ENCODE measurements at regions of chr3 and their contacts with region 1.

Region 1: DNA sequence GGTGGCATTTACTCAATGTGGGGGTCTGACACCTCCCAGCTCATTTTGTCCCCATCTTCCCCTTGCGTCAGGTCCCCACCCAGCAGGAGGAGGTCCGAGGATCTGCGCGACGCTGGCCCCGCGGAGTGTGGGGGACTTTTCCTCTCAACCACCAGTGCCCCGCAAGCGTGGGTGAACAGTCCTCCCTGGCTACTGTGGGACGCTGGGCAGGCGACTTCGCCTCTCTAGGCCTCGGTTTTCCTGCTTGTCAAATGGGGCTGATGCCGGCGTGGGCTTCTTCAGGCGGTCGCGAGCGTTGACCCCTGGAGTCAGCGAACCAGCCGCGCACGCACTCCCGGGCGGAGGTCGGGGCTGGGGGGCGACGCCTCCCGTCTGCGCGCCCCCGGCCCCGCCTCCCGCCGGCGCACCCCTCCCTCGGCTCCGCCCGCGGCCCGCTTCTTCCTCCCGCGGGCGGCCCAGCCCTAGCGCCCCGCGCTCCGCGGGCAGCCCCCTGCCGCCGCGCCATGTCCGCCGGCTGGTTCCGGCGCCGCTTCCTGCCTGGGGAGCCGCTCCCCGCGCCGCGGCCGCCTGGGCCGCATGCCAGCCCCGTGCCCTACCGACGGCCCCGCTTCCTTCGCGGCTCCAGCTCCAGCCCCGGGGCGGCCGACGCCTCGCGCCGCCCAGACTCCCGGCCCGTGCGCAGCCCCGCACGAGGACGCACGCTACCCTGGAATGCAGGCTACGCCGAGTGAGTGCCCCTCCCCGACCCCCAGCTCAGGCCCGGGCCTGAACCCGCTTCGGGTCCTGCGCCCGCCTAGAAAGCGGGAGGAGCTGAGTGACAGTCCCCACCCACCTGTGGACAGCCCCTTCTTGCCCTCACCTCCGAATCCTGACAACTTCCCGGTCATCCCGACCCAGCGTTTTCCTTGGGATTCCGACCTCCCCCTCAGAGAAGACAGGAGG is at the start of gene PPM1M:
- DNase-seq: peak; percentile 57 to 77 (median 73)
- ATAC-seq: peak; percentile 72
- H3K4me3 ChIP-seq: peak within 1 kb of the TSS; percentile 79
- H3K4me3 Mint-ChIP-seq: peak within 1 kb of the TSS; percentile 83 to 91 (median 87)
- H3K27ac ChIP-seq: peak within 1 kb of the TSS; percentile 91
- H3K27ac Mint-ChIP-seq: peak within 1 kb of the TSS; percentile 83 to 99 (median 95)
- H3K4me1 ChIP-seq: peaks cover 48 to 81% of the 10 kb centered on the region in 2 donors
- H3K4me1 Mint-ChIP-seq: peaks cover 36 to 91% (median 84%) of the 10 kb centered on the region in 7 donors
- H3K27me3 ChIP-seq: no peaks in the 10 kb centered on the region
- H3K27me3 Mint-ChIP-seq: no peaks in the 10 kb centered on the region
- total RNA-seq, gene PPM1M: 55.8 to 81.0 (median 74.5) TPM

Region 2: DNA sequence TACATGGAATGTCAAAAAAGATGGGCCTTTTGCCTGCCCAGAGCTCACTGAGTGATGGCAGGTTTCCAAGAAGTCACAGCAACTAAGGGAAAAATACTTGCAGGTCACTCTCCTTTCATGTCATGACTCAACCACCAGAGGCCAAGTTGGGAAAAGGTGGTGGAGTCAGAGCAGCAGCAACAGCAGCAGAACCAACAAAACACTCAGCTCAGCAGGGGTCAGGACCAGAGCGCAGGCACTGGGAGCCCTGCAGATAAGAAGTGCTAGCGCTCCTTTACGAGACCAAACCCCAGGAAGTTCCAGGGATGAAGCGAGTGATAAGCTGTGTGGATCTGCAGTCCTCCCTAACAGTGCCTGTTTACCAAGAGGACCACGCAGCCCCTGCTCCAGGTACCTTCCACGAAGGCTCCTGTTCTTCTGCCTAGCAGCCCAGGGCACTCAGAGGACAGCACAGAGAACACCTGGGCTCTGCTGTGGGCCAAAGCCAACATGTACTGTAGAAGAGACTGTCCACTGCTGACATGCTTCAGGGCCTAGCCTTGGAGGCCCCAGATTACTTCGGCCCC is 117.4 kb before region 1 on chr3:
- CTCF ChIA-PET with region 1: no interaction called
- POLR2A ChIA-PET with region 1: no interaction called
- intact Hi-C with region 1: no loop called
- DNase-seq: no peak
- ATAC-seq: no peak
- H3K4me3 ChIP-seq: no peak overlapping the region
- H3K4me3 Mint-ChIP-seq: no peak overlapping the region
- H3K27ac ChIP-seq: no peak overlapping the region
- H3K27ac Mint-ChIP-seq: peak overlapping the region in 1 of 9 donors; percentile 45
- H3K4me1 ChIP-seq: no peaks in the 10 kb centered on the region
- H3K4me1 Mint-ChIP-seq: peaks cover 0 to 5% (median 0%) of the 10 kb centered on the region in 7 donors
- H3K27me3 ChIP-seq: no peaks in the 10 kb centered on the region
- H3K27me3 Mint-ChIP-seq: no peaks in the 10 kb centered on the region

Region 3: DNA sequence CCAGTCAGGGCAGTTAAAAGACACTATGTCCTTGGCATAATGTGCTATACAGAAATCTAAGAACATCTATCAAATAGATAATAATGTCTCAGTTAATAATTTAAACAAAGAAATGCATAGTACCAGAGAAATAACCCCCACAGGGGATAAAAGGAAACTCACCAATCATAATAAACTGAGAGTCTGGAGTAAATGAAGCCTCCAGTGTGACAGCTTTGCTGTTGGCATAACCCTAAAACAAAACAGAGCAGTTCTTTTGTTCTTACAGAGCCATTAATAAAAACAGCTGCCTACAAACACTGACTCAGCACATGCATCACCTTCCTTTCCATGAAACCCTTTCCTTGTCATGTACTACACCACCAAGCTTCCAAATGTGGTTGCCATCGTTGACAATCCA is 13.4 kb after region 1 on chr3:
- CTCF ChIA-PET with region 1: interaction called, 15 read pairs
- POLR2A ChIA-PET with region 1: interaction called, 167 read pairs
- intact Hi-C with region 1: no loop called
- DNase-seq: no peak
- ATAC-seq: no peak
- H3K4me3 ChIP-seq: no peak overlapping the region
- H3K4me3 Mint-ChIP-seq: peak overlapping the region in 5 of 10 donors; percentile 23 to 84 (median 27)
- H3K27ac ChIP-seq: peak overlapping the region; percentile 87
- H3K27ac Mint-ChIP-seq: peak overlapping the region; percentile 75 to 99 (median 92)
- H3K4me1 ChIP-seq: peaks cover 47 to 90% of the 10 kb centered on the region in 2 donors
- H3K4me1 Mint-ChIP-seq: peaks cover 61 to 100% (median 93%) of the 10 kb centered on the region in 7 donors
- H3K27me3 ChIP-seq: no peaks in the 10 kb centered on the region
- H3K27me3 Mint-ChIP-seq: no peaks in the 10 kb centered on the region